CD8-positive, alpha-beta T cell (primary cell): ENCODE measurements at regions of chr19 and their contacts with region 1.

Region 1: GRCh38 chr19:45862564-45863334 is at the start of gene SYMPK:
- DNase-seq: peak; percentile 97 to 99 (median 98)
- ATAC-seq: peak; percentile 97
- H3K4me3 ChIP-seq: peak within 1 kb of the TSS; percentile 93 to 99
- H3K4me3 Mint-ChIP-seq: peak within 1 kb of the TSS; percentile 93
- H3K27ac ChIP-seq: peak within 1 kb of the TSS; percentile 82 to 96
- H3K27ac Mint-ChIP-seq: peak within 1 kb of the TSS; percentile 93
- H3K4me1 ChIP-seq: peaks cover 20% of the 10 kb centered on the region
- H3K4me1 Mint-ChIP-seq: peaks cover 32% of the 10 kb centered on the region
- H3K27me3 ChIP-seq: peaks cover 0 to 10% of the 10 kb centered on the region in 2 experiments
- H3K27me3 Mint-ChIP-seq: peaks cover 16% of the 10 kb centered on the region
- CTCF ChIP-seq: no peak
- total RNA-seq, gene SYMPK: 52.6 to 54.2 TPM

Region 2: DNA sequence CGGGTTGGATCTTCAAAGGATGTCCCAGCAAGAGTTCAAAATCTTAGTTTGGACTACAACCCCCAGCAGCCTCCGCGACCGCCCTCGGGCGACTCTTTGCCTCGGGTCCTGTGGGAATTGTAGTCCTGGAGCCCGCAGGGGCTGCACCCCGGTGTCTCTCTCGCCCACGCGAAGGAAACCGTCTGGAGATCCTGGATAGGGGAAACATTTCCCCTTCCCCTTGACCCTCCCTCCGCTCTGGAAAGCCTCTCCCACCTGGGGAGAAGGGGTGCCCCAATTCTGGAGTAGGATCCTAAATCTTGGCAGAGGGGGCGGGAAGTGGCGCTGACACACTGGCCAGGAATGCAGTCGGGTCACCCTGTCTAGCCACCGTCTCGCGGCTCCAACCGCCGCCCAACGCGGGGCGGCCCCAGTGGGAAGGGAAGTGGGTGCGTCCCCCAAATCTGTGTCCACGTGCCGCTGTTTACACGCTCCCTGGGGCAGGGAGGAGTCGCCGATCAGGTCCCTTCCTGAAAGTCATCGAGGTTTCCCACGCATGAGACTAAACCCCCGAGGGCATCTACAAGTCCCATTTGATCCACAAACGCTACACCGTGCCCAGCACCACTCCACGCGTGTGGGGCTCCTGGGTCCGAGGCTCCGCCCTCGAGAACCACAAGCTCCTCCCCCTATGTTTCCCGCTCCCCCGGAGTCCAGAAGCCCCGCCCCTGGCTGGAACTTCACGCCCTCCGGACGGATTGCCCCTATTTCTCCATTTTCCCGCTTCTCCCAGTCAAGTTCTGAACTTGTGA is 457.1 kb before region 1 on chr19:
- CTCF ChIA-PET with region 1: no interaction called
- POLR2A ChIA-PET with region 1: no interaction called
- intact Hi-C with region 1: loop called in 1 of 2 experiments (anchors 2 kb)
- DNase-seq: peak; percentile 69 to 89 (median 85)
- ATAC-seq: peak; percentile 63
- H3K4me3 ChIP-seq: peak overlapping the region; percentile 63 to 85
- H3K4me3 Mint-ChIP-seq: peak overlapping the region; percentile 97
- H3K27ac ChIP-seq: peak overlapping the region; percentile 68 to 92
- H3K27ac Mint-ChIP-seq: peak overlapping the region; percentile 95
- H3K4me1 ChIP-seq: peaks cover 25% of the 10 kb centered on the region
- H3K4me1 Mint-ChIP-seq: peaks cover 31% of the 10 kb centered on the region
- H3K27me3 ChIP-seq: peaks cover 16 to 26% of the 10 kb centered on the region in 2 experiments
- H3K27me3 Mint-ChIP-seq: peaks cover 26% of the 10 kb centered on the region
- CTCF ChIP-seq: no peak

Region 3: DNA sequence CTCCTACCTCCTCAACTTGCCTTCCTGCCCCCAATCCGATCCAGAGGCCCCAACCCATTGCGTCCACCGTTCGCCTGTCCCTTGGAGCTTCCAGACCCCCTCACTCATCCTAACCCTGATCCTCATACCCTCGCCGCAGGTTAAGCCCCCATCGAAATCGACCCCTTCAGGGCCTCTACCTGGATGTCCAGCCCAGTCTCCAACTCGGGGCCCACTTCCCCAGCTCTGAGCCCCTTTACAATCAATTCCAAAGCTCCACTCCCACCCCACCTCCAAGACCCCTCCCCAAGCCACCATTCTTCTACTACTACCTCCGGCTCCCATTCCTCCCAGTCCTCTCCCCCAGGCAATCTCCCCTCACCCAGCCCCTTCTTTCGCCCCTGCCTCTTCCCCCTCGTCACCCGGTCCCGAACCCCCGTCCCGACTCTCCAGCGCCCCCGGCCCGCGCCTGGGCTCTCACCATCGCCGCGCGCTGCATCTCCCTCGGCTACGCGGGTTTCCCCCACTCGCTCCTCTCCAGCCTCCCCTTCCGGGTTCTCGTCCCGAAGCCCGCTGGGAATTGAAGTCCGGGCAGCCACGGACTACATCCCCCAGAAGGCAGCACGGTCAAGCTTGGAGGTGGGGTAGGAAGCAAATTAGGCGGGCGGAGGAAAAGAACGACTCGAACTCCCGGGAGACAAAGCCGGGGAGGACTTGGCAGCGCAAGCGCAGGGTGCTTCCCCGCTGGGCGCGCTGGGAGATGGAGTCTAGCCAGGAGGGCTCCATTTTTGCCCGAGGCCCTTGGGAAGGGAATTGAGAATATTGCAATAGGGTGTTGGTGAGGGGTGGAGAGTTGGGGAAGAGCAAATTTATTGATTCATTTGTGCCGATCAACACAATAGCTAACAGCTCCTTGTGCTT is 132.1 kb before region 1 on chr19 and contains the start of gene FBXO46:
- CTCF ChIA-PET with region 1: no interaction called
- POLR2A ChIA-PET with region 1: no interaction called
- intact Hi-C with region 1: loop called in 1 of 2 experiments (anchors 1 kb)
- DNase-seq: peak; percentile 82 to 97 (median 92)
- ATAC-seq: peak; percentile 98
- H3K4me3 ChIP-seq: peak within 1 kb of the TSS; percentile 74 to 91
- H3K4me3 Mint-ChIP-seq: peak within 1 kb of the TSS; percentile 97
- H3K27ac ChIP-seq: peak within 1 kb of the TSS; percentile 67 to 78
- H3K27ac Mint-ChIP-seq: peak within 1 kb of the TSS; percentile 92
- H3K4me1 ChIP-seq: peaks cover 19% of the 10 kb centered on the region
- H3K4me1 Mint-ChIP-seq: peaks cover 32% of the 10 kb centered on the region
- H3K27me3 ChIP-seq: no peaks in the 10 kb centered on the region
- H3K27me3 Mint-ChIP-seq: no peaks in the 10 kb centered on the region
- CTCF ChIP-seq: no peak
- total RNA-seq, gene FBXO46: 15.2 to 17.1 TPM

Region 4: GRCh38 chr19:45792470-45793177 is 70.1 kb before region 1 on chr19 and contains the start of gene DMWD:
- CTCF ChIA-PET with region 1: no interaction called
- POLR2A ChIA-PET with region 1: interaction called, 3 read pairs
- intact Hi-C with region 1: loop called (anchors 1 kb)
- DNase-seq: peak; percentile 99 to 100 (median 99)
- ATAC-seq: peak; percentile 96
- H3K4me3 ChIP-seq: peak within 1 kb of the TSS; percentile 55 to 62
- H3K4me3 Mint-ChIP-seq: peak within 1 kb of the TSS; percentile 90
- H3K27ac ChIP-seq: peak within 1 kb of the TSS; percentile 37 to 63
- H3K27ac Mint-ChIP-seq: peak within 1 kb of the TSS; percentile 75
- H3K4me1 ChIP-seq: peaks cover 28% of the 10 kb centered on the region
- H3K4me1 Mint-ChIP-seq: peaks cover 37% of the 10 kb centered on the region
- H3K27me3 ChIP-seq: peaks cover 3 to 6% of the 10 kb centered on the region in 2 experiments
- H3K27me3 Mint-ChIP-seq: peaks cover 18% of the 10 kb centered on the region
- CTCF ChIP-seq: no peak
- total RNA-seq, gene DMWD: 23.8 to 25.5 TPM

Region 5: GRCh38 chr19:45886427-45887199 is 23.9 kb after region 1 on chr19:
- CTCF ChIA-PET with region 1: interaction called, 20 read pairs
- POLR2A ChIA-PET with region 1: interaction called, 16 read pairs
- intact Hi-C with region 1: loop called (anchors 1 kb)
- DNase-seq: peak; percentile 81 to 96 (median 89)
- ATAC-seq: peak; percentile 69
- H3K4me3 ChIP-seq: peak overlapping the region; percentile 77 to 87
- H3K4me3 Mint-ChIP-seq: peak overlapping the region; percentile 98
- H3K27ac ChIP-seq: peak overlapping the region; percentile 69 to 92
- H3K27ac Mint-ChIP-seq: peak overlapping the region; percentile 97
- H3K4me1 ChIP-seq: peaks cover 41% of the 10 kb centered on the region
- H3K4me1 Mint-ChIP-seq: peaks cover 24% of the 10 kb centered on the region
- H3K27me3 ChIP-seq: no peaks in the 10 kb centered on the region
- H3K27me3 Mint-ChIP-seq: no peaks in the 10 kb centered on the region
- CTCF ChIP-seq: no peak

Region 6: GRCh38 chr19:45927565-45928261 is 65.0 kb after region 1 on chr19:
- CTCF ChIA-PET with region 1: interaction called, 3 read pairs
- POLR2A ChIA-PET with region 1: no interaction called
- intact Hi-C with region 1: loop called (anchors 1 to 2 kb)
- DNase-seq: peak; percentile 72 to 94 (median 88)
- ATAC-seq: peak; percentile 100
- H3K4me3 ChIP-seq: no peak overlapping the region
- H3K4me3 Mint-ChIP-seq: no peak overlapping the region
- H3K27ac ChIP-seq: no peak overlapping the region
- H3K27ac Mint-ChIP-seq: peak overlapping the region; percentile 7
- H3K4me1 ChIP-seq: peaks cover 7% of the 10 kb centered on the region
- H3K4me1 Mint-ChIP-seq: peaks cover 8% of the 10 kb centered on the region
- H3K27me3 ChIP-seq: no peaks in the 10 kb centered on the region
- H3K27me3 Mint-ChIP-seq: peaks cover 4% of the 10 kb centered on the region
- CTCF ChIP-seq: peak; percentile 15

Region 7: GRCh38 chr19:46016426-46017094 is 153.8 kb after region 1 on chr19:
- CTCF ChIA-PET with region 1: no interaction called
- POLR2A ChIA-PET with region 1: no interaction called
- intact Hi-C with region 1: loop called (anchors 1 kb)
- DNase-seq: peak; percentile 59 to 90 (median 83)
- ATAC-seq: peak; percentile 77
- H3K4me3 ChIP-seq: peak overlapping the region; percentile 93
- H3K4me3 Mint-ChIP-seq: peak overlapping the region; percentile 87
- H3K27ac ChIP-seq: peak overlapping the region; percentile 0 to 25
- H3K27ac Mint-ChIP-seq: peak overlapping the region; percentile 28
- H3K4me1 ChIP-seq: peaks cover 12% of the 10 kb centered on the region
- H3K4me1 Mint-ChIP-seq: peaks cover 17% of the 10 kb centered on the region
- H3K27me3 ChIP-seq: peaks cover 0 to 3% of the 10 kb centered on the region in 2 experiments
- H3K27me3 Mint-ChIP-seq: peaks cover 11% of the 10 kb centered on the region
- CTCF ChIP-seq: peak; percentile 84